ENCODE measurements at regions of chr9 and their contacts with region 1.

Region 1: DNA sequence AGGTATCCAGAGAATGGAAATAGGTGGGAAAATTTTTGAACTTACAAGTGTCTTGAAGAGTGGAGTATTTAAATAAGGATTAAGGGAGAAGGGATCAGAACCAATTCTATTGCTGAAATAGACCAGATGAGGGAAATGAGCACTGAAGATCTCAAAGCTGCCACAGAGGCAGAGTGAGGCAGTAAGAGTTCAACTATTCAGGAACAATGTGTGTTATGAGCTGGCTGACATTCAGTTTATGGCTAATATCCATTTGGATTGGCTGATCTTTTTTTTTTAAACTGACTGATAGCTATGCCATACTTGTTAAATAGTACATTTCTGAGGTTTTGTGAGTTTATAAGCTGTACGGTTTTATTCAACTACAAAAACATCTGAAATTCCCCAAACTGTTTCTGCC is 95.3 kb upstream of the GNA14 start:
- DNase-seq: no peak

Region 2: DNA sequence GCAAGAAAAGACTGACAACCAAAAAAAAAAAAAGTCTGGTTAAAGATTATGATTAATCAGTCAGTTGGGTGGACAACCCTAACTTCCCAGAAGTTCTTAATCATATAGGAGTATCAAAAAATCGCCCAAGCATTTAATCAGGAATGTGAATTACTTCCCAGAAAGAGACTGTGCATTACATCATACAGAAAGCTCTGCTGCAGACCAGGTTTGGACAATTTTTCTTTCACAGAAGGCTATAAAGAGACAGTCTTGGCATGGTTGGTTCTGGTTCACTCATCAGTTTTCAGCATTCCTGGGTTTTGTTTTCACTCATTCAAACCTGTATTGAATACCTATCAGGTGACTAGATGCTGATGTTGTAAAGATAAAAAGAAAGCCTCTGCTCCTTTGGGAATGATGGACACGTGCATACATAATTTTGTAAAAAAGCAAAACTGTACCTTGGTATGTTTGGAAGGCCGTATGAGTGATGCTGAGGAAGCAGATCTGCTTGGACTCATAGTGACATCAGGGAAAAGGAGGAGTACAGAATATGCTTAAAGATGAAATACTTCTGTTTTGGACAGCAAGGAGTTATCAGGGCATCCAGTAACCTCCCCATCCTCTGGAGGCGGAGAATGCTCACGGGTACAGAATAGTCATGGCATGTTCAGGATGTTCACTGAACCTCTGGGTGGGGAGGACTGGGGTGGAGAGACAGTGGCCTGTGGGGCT is 273.7 kb before region 1 on chr9:
- intact Hi-C with region 1: loop called in 1 of 2 experiments (anchors 10 kb)
- DNase-seq: no peak

Region 3: DNA sequence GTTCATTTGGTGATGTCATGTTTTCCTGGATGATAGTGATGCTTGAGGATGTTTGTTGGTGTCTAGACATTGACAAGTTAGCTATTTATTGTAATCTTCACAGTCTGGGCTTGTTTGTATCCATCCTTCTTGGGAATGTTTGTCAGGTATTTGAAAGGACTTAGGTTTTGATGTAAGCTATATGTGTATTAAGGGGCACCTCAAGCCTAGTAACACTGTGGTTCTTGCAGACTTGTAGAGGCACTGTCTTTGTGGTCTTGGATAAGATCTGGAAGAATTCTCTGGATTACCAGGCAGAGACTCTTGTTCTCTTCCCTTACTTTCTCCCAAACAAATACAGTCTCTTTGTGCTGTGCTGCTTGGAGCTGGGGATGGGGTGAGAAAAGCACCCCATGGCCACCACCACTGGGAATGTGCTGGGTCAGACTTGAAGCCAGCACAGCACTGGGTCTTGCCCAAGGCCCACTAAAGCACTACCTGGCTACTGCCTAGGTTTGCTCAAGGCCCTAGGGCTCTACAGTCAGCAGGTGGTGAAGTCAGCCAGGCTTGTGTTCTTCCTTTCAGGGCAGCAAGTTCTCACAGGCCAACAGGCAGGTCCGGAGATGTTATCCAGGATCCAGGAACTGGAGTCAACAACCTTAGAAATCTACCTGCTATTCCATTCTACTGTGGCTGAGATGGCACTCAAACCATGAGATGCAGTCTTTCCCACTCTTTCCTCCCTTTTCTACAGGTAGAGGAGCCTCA is 46.0 kb before region 1 on chr9:
- intact Hi-C with region 1: no loop called
- DNase-seq: no peak

Measured in posterior vena cava (tissue), 2 donors.